Heart left ventricle (tissue), 16 donors: ENCODE measurements at regions of chr18 and their contacts with region 1.

Region 1: GRCh38 chr18:46424898-46425297 is 232.1 kb downstream of the LOXHD1 start:
- DNase-seq: peak in 1 of 5 donors; percentile 15
- ATAC-seq: no peak
- H3K4me3 ChIP-seq: no peak overlapping the region
- H3K27ac ChIP-seq: no peak overlapping the region
- H3K4me1 ChIP-seq: peaks cover 0 to 12% (median 0%) of the 10 kb centered on the region in 12 donors
- H3K27me3 ChIP-seq: no peaks in the 10 kb centered on the region
- CTCF ChIP-seq: no peak
- POLR2A ChIP-seq: no peak

Region 2: GRCh38 chr18:46488471-46489213 is 63.7 kb after region 1 on chr18:
- intact Hi-C with region 1: loop called in 1 of 10 experiments (anchors 5 kb)
- DNase-seq: peak in 1 of 5 donors; percentile 43
- ATAC-seq: peak; percentile 78 to 91 (median 86)
- H3K4me3 ChIP-seq: no peak overlapping the region
- H3K27ac ChIP-seq: peak overlapping the region in 4 of 12 donors; percentile 24 to 56 (median 36)
- H3K4me1 ChIP-seq: peaks cover 0 to 20% (median 3%) of the 10 kb centered on the region in 12 donors
- H3K27me3 ChIP-seq: no peaks in the 10 kb centered on the region
- CTCF ChIP-seq: no peak
- POLR2A ChIP-seq: no peak